PC-9 (cell line): ENCODE measurements at regions of chr14 and their contacts with region 1.

Region 1: DNA sequence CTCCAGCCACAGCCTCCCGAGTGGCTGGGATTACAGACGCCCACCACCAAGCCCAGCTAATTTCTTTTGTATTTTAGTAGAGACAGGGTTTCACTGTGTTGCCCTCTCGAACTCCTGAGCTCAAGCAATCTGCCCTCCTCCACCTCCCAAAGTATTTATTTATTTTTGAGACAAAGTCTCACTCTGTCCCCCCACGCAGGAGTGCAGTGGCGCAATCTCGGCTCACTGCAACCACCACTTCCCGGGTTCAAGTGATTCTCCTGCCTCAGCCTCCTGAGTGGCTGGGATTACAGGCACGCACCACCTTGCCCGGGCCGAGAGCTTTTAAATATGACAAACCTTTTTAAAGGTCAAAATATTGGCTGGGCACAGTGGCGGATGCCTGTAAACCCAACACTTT is 14.6 kb downstream of the NUMB start:
- DNase-seq: no peak
- H3K4me3 ChIP-seq: no peak overlapping the region
- H3K27ac ChIP-seq: no peak overlapping the region
- H3K4me1 ChIP-seq: no peaks in the 10 kb centered on the region
- H3K27me3 ChIP-seq: no peaks in the 10 kb centered on the region
- CTCF ChIP-seq: no peak

Region 2: GRCh38 chr14:73323889-73324535 is 119.7 kb before region 1 on chr14:
- CTCF ChIA-PET with region 1: no interaction called
- POLR2A ChIA-PET with region 1: interaction called, 12 read pairs
- intact Hi-C with region 1: no loop called
- DNase-seq: no peak
- H3K4me3 ChIP-seq: no peak overlapping the region
- H3K27ac ChIP-seq: no peak overlapping the region
- H3K4me1 ChIP-seq: no peaks in the 10 kb centered on the region
- H3K27me3 ChIP-seq: no peaks in the 10 kb centered on the region
- CTCF ChIP-seq: no peak